ENCODE measurements at regions of chr1 and their contacts with region 1.

Region 1: DNA sequence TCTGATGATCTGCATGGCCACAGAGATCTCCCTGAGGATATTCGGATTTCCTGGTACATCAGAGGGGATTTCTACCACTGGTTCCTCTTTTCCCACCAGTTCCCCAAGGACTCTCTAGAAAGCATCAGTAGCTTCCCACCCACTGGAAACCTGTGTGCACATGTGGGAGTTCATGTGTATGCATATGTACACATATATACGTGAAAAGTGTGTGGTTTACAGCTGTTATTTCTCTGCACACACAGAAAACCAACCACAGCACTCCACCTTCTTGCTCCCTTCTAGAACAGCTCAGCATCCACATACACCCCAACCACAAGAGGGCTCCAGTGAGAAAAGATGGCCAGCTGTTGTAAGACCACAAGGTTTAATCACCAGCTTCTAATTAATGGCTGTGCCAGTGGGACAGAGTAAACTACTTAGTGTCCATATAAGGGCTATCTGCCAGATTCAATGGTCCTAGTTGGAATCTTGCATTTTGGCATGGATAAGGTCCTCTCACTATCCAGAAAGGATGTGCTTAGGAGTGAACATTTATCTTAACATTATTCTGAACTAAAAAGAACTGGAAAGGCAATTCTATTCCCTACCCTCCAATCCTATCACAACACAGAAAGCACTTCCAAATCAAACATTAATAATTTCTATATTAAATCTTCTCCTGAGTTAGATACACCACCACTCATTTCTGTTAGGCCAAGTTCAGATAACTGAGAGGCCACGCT is 24.1 kb downstream of the GPR3 start:
- DNase-seq: peak; percentile 70
- H3K4me3 Mint-ChIP-seq: no peak overlapping the region
- H3K27ac Mint-ChIP-seq: no peak overlapping the region
- H3K4me1 Mint-ChIP-seq: peaks cover 39% of the 10 kb centered on the region
- H3K27me3 Mint-ChIP-seq: no peaks in the 10 kb centered on the region

Region 2: DNA sequence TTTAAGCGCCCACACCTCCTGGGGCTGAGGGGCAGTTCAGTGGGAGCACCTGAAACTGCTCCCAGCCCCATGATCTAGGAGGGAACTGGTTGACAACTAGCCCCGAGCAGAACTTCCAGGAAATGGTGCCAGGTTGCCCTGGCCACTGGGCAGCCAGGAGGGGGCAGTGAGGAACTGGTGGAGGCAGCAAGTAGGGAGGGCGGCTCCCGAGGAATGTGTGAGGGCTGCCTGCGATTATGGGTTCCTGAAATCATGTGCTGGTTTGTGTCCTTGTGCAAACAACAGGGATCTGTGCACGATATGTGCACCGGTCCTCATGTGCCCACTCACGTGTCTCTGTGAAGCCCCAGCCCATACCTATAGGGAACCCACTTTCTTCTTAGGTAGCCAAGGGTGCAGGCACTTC is 14.2 kb before region 1 on chr1:
- CTCF ChIA-PET with region 1: interaction called, 13 read pairs
- POLR2A ChIA-PET with region 1: no interaction called
- intact Hi-C with region 1: no loop called
- DNase-seq: peak; percentile 43
- H3K4me3 Mint-ChIP-seq: no peak overlapping the region
- H3K27ac Mint-ChIP-seq: peak overlapping the region; percentile 33
- H3K4me1 Mint-ChIP-seq: peaks cover 7% of the 10 kb centered on the region
- H3K27me3 Mint-ChIP-seq: no peaks in the 10 kb centered on the region

Region 3: DNA sequence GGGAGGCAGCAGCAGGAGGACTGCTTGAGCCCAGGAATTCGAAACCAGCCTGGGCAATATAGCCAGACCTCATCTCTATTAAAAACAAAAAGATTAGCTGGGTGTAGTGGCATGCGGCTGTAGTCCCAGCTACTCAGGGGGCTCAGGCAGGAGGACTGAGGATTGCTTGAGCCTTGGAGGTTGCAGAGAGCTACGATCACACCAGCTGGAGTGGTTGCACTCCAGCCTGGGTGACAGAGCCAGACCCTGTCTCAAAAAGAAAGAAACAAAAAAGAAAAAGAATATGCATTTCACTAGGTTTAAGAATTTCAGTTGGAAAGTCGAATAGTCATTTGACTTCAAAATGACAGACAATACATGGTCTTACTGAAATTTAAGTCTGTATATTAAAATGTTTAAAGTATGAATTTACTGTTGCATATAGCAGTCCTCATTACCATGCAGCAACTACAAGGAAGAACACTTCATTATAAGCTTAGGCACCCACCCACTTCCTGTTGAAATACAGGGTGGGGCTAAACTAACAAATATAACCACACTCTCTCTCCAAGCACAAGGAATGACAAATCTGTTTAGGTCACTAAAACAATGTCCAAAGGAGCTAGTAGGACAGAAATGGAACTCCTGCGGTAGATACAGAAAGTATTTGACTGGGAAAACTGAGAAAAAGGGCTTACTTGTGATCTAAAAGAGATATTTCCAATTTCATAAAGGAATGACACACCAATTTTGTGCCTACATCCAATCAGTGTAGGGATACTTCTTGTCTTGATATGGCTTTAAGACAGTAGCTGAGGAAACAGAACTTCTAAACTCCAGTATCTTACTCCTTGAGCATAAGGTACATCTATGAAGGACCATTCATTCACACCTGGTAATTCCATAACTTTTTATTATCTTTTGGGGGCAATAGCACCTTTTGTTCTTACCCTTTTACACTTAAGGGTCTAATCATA is 19.9 kb after region 1 on chr1:
- CTCF ChIA-PET with region 1: interaction called, 17 read pairs
- POLR2A ChIA-PET with region 1: no interaction called
- intact Hi-C with region 1: no loop called
- DNase-seq: no peak
- H3K4me3 Mint-ChIP-seq: no peak overlapping the region
- H3K27ac Mint-ChIP-seq: peak overlapping the region; percentile 82
- H3K4me1 Mint-ChIP-seq: peaks cover 73% of the 10 kb centered on the region
- H3K27me3 Mint-ChIP-seq: no peaks in the 10 kb centered on the region

Region 4: DNA sequence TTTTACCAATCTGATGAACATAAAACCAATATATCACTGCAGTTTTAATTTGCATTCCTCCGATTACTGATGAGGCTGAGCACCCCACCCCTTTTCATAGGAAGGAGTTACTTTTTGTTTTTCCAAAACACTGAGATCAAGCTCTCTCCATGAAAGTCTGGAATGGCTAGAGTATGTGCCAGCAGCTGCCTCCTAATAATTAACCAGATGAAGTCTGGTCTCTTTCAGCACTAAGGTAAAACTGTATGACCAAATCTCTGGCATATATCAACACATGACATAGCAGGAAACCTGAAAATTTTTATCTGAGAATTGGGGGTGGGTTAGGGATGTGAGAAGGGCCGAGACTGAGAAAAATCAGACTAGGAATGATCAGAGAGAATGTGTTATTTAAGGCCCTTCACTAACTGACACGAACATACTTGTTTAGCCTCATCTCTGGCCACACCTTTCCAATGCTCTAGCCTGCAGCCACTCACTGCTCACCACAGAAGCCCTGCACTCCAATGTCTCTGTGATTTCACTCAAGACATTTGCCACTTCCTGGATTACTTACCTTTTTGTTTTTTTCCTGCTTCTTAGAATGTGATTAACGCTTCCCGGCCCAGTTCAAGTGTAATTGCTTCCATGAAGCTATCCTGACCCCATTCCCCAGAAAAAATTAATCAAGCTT is 38.7 kb after region 1 on chr1:
- CTCF ChIA-PET with region 1: interaction called, 3 read pairs
- POLR2A ChIA-PET with region 1: no interaction called
- intact Hi-C with region 1: loop called (anchors 5 kb)
- DNase-seq: peak; percentile 53
- H3K4me3 Mint-ChIP-seq: no peak overlapping the region
- H3K27ac Mint-ChIP-seq: peak overlapping the region; percentile 82
- H3K4me1 Mint-ChIP-seq: peaks cover 39% of the 10 kb centered on the region
- H3K27me3 Mint-ChIP-seq: no peaks in the 10 kb centered on the region

Region 5: DNA sequence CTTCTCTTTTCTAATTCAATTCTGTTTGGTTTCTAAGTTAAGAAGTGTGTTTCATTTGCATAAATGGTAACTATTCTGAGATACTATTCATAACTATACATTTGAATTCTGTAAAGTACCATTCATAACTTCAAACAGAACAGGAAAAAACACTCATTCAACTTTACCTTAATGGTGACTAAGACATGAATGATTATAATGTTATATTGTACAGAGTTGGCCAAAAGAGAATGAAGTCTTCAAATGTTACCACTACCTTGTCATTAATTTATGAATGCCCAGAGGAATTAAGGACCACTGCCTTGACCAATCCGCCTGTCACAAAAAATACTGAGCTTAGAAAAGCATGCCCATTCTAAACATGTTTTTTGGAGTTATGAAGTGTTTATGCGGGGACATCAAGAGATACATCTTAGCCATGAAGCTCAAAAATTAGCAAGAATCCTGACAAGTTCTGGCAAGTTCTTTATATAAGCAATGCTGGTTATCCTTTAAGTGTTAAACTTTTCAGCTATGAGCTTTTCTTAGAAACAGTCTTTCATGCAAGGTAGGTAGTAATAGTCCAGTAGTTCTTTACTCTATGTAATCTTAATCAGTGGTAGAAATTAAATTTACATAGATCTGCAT is 65.6 kb after region 1 on chr1:
- CTCF ChIA-PET with region 1: interaction called, 8 read pairs
- POLR2A ChIA-PET with region 1: interaction called, 4 read pairs
- intact Hi-C with region 1: loop called (anchors 1 kb)
- DNase-seq: no peak
- H3K4me3 Mint-ChIP-seq: no peak overlapping the region
- H3K27ac Mint-ChIP-seq: peak overlapping the region; percentile 76
- H3K4me1 Mint-ChIP-seq: peaks cover 52% of the 10 kb centered on the region
- H3K27me3 Mint-ChIP-seq: no peaks in the 10 kb centered on the region

Region 6: GRCh38 chr1:27525296-27526272 is 109.0 kb after region 1 on chr1:
- CTCF ChIA-PET with region 1: interaction called, 10 read pairs
- POLR2A ChIA-PET with region 1: interaction called, 3 read pairs
- intact Hi-C with region 1: loop called (anchors 2 kb)
- DNase-seq: peak; percentile 80
- H3K4me3 Mint-ChIP-seq: peak overlapping the region; percentile 62
- H3K27ac Mint-ChIP-seq: peak overlapping the region; percentile 7
- H3K4me1 Mint-ChIP-seq: peaks cover 57% of the 10 kb centered on the region
- H3K27me3 Mint-ChIP-seq: no peaks in the 10 kb centered on the region